ENCODE measurements at regions of chr6 and their contacts with region 1.

Region 1: DNA sequence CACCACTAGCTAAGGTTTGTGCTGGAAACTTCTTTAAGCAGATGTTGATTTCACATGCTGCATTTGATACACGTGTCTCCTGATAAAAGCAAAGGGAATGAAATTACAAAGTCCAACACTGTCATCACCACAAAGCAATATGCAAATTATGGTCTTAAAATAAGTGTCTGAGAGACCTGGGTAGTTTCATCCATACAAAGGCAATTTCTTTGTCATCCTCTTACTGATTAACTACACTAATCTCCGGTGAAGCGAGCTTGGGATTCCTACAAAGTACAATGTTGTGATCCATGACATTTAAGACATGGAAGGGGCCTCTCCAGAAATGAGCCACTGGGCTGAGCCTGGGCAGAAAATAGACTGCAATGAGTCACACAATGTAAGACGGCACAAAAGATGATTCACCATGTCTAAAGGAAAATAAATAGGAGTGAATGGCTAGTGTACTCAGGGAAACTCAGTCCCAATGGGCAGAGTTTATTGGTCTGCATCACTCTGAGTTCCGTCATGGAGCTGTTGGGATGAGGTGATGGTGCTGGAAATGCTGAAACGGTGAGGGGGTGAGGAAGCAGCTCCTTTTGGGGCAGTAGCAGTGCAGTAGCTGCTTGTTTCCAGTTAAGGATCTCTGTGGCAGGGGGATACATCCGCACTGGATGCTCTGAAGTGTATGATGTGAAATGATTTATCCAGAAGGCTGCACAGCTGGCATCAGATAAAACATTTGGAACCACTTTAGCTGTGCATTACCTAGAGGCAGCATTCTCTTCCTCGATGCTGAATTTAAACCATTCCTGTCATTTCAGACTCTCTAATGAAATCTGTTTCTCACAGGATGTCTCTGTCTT is 103.3 kb downstream of the IBTK start:
- DNase-seq: no peak
- ATAC-seq: peak; percentile 81

Region 2: DNA sequence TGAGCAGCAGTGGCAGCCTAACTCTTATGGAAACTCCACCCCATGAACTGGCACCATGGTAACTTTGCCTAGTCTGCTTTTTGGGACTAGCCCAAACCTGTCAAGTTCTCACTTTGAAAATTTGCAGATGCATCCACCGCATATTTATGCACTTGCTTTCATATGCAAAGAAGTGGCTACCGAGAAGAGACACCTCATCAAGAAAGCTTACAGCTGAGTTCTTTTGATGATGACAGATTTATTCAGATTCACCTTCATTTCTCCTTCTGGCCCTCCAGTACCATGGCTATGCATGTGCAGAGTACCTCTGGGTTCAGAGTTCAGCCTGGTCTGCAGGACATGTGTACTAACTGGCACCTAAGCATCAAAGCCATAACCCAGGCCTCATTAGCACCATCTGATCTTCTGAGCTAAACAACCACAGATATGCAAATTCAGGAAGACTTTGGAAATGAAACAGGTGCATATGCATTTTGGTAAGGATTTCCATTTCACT is 237.5 kb before region 1 on chr6:
- intact Hi-C with region 1: loop called (anchors 10 kb)
- DNase-seq: no peak
- ATAC-seq: peak; percentile 43

Region 3: DNA sequence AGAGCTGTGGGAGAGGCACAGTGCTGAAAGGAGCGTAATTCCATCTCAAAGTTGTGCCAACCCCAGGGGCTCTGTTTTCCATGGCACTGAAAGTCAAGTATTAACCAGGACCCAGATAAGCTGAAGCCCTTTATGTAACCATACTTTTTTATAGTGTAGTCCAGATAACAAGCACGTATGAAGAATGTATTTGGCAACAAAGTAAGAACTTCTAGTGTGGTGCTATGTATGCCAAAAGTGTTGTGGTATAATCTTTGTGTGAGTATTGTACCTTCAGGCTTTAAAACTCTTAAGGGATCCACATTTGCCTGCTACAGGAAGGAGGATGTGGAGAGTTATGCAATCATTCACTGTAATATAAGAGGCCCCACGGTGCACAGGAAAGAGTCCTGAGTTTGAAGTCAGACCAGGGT is 26.1 kb before region 1 on chr6:
- intact Hi-C with region 1: loop called (anchors 2 kb)
- DNase-seq: no peak
- ATAC-seq: peak; percentile 88

Region 4: GRCh38 chr6:82166493-82166892 is 22.3 kb after region 1 on chr6:
- intact Hi-C with region 1: loop called (anchors 2 kb)
- DNase-seq: no peak
- ATAC-seq: peak; percentile 90